Body of pancreas (tissue), 4 donors: ENCODE measurements at regions of chr15 and their contacts with region 1.

Region 1: GRCh38 chr15:64046347-64047153 is at the start of gene DAPK2:
- DNase-seq: peak; percentile 75 to 84 (median 77)
- ATAC-seq: peak; percentile 90
- H3K4me3 ChIP-seq: peak within 1 kb of the TSS in 1 of 2 donors; percentile 21
- H3K27ac ChIP-seq: peak within 1 kb of the TSS in 3 of 4 donors; percentile 17 to 27 (median 19)
- H3K4me1 ChIP-seq: peaks cover 28% of the 10 kb centered on the region
- H3K27me3 ChIP-seq: no peaks in the 10 kb centered on the region
- CTCF ChIP-seq: peak; percentile 48 to 91 (median 72)
- POLR2A ChIP-seq: peak in 1 of 3 donors; percentile 33
- total RNA-seq, gene DAPK2: 2.9 to 5.9 TPM

Region 2: DNA sequence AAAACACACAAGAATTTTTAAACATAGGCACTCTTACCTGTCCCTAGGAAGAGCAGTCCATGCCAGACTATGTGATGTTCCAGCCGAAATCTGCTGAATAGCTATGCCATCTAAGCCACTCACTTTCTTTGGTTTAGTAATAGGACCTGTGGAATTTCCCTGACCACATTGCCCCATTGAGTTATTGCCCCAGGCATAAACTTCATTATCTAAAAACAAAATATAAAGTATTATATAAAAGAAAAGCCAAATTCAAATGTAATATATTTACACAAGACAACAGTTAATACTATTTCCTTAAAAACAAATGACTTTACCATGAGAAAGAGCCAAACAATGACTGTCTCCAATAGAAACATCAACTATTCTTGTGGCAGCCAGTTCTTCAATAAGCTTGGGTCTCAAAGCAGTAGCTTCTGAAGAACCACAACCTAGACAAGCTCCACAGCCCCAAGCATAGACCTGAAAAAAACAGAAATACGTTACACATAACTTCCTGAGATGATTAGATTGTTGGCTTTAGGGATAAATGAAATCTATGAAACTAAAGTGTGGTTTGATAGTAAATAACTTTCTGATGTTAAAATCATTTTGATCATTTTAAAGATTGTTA is 297.1 kb before region 1 on chr15:
- intact Hi-C with region 1: no loop called
- DNase-seq: no peak
- ATAC-seq: no peak
- H3K4me3 ChIP-seq: no peak overlapping the region
- H3K27ac ChIP-seq: no peak overlapping the region
- H3K4me1 ChIP-seq: no peaks in the 10 kb centered on the region
- H3K27me3 ChIP-seq: no peaks in the 10 kb centered on the region
- CTCF ChIP-seq: no peak
- POLR2A ChIP-seq: no peak

Region 3: GRCh38 chr15:63945007-63945788 is 101.4 kb before region 1 on chr15:
- intact Hi-C with region 1: loop called (anchors 5 kb)
- DNase-seq: peak; percentile 77 to 83 (median 80)
- ATAC-seq: peak; percentile 88
- H3K4me3 ChIP-seq: no peak overlapping the region
- H3K27ac ChIP-seq: no peak overlapping the region
- H3K4me1 ChIP-seq: peaks cover 9% of the 10 kb centered on the region
- H3K27me3 ChIP-seq: no peaks in the 10 kb centered on the region
- CTCF ChIP-seq: peak; percentile 77 to 94 (median 92)
- POLR2A ChIP-seq: no peak

Region 4: GRCh38 chr15:64187396-64188191 is 141.0 kb after region 1 on chr15:
- intact Hi-C with region 1: no loop called
- DNase-seq: no peak
- ATAC-seq: no peak
- H3K4me3 ChIP-seq: no peak overlapping the region
- H3K27ac ChIP-seq: no peak overlapping the region
- H3K4me1 ChIP-seq: no peaks in the 10 kb centered on the region
- H3K27me3 ChIP-seq: no peaks in the 10 kb centered on the region
- CTCF ChIP-seq: no peak
- POLR2A ChIP-seq: no peak